Breast epithelium (tissue), 4 donors: ENCODE measurements at regions of chr7 and their contacts with region 1.

Region 1: GRCh38 chr7:831596-832166 is 595 bp upstream of the SUN1 start:
- DNase-seq: no peak
- H3K4me3 ChIP-seq: peak overlapping the region in 2 of 3 donors; percentile 25 to 47
- H3K27ac ChIP-seq: peak overlapping the region; percentile 90 to 95
- H3K4me1 ChIP-seq: peaks cover 9 to 16% of the 10 kb centered on the region in 2 donors
- H3K27me3 ChIP-seq: no peaks in the 10 kb centered on the region
- CTCF ChIP-seq: no peak
- POLR2A ChIP-seq: no peak

Region 2: GRCh38 chr7:816300-816750 is 15.4 kb before region 1 on chr7:
- intact Hi-C with region 1: no loop called
- DNase-seq: peak; percentile 98
- H3K4me3 ChIP-seq: peak overlapping the region; percentile 67 to 89 (median 86)
- H3K27ac ChIP-seq: peak overlapping the region; percentile 99
- H3K4me1 ChIP-seq: peaks cover 9 to 16% of the 10 kb centered on the region in 2 donors
- H3K27me3 ChIP-seq: no peaks in the 10 kb centered on the region
- CTCF ChIP-seq: no peak
- POLR2A ChIP-seq: no peak

Region 3: GRCh38 chr7:865921-866320 is 34.2 kb after region 1 on chr7:
- intact Hi-C with region 1: loop called (anchors 1 kb)
- DNase-seq: no peak
- H3K4me3 ChIP-seq: no peak overlapping the region
- H3K27ac ChIP-seq: peak overlapping the region; percentile 92 to 95
- H3K4me1 ChIP-seq: peaks cover 4 to 10% of the 10 kb centered on the region in 2 donors
- H3K27me3 ChIP-seq: no peaks in the 10 kb centered on the region
- CTCF ChIP-seq: no peak
- POLR2A ChIP-seq: no peak

Region 4: DNA sequence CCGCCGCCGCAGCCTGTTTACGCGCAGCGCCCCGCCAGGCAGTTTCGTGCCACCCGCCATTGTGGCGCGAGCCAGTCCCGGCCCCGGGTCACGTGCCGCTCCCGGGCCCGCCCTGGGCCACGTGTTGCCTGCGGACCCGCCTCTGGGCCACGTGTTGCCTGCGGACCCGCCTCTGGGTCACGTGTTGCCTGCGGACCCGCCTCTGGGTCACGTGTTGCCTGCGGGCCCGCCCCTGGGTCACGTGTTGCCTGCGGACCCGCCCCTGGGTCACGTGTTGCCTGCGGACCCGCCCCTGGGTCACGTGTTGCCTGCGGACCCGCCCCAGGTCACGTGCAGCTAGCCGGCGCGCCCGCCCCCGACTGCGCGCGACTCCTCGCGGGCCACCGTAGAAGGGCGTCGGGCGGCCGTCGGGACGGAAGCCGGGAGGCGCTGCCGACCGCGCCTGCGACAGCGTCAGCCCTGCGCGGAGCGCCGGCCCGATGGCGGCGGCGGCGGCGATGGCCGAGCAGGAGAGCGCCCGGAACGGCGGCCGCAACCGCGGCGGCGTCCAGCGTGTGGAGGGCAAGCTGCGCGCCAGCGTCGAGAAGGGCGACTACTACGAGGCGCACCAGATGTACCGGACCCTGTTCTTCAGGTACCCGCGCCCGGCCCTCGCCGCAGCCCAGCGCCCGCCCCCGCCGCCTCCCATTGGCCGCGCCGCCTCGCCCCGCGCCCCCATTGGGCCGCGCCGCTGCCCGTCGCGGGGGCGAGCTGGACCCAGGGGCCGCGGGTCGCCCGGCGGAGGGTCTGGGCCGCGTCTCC is 44.7 kb after region 1 on chr7 and contains the start of gene GET4:
- intact Hi-C with region 1: no loop called
- DNase-seq: peak; percentile 97
- H3K4me3 ChIP-seq: peak within 1 kb of the TSS; percentile 72 to 89 (median 86)
- H3K27ac ChIP-seq: peak within 1 kb of the TSS; percentile 94 to 95
- H3K4me1 ChIP-seq: peaks cover 0 to 5% of the 10 kb centered on the region in 2 donors
- H3K27me3 ChIP-seq: no peaks in the 10 kb centered on the region
- CTCF ChIP-seq: no peak
- POLR2A ChIP-seq: peak; percentile 76
- total RNA-seq, gene GET4: 23.7 to 33.4 (median 29.5) TPM